Endothelial cell of umbilical vein (primary cell): ENCODE measurements at regions of chr20 and their contacts with region 1.

Region 1: DNA sequence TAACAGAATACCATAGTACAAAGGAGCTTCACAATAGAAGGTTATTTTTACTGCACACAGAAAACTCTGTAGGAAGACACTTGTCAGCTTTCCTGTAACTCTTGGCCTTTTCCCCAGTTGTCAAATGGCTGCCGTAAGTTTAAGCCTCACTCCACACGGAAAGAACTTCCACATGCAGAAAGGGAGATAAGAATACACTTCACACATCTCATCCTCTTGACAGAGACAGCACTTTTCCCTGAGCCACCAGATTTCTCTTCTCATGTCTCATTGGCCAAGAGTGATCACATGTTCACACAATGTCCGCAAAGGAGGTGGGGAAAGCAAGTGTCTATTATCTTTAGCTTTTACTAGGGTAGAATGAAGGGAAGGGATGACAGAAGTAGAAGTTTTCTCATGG is 540.7 kb downstream of the HAO1 start:
- DNase-seq: peak; percentile 79
- H3K4me3 ChIP-seq: no peak overlapping the region
- H3K27ac ChIP-seq: peak overlapping the region; percentile 59
- H3K4me1 ChIP-seq: peaks cover 15% of the 10 kb centered on the region
- H3K27me3 ChIP-seq: peaks cover 0 to 2% of the 10 kb centered on the region in 2 experiments
- CTCF ChIP-seq: no peak
- POLR2A ChIP-seq: no peak

Region 2: DNA sequence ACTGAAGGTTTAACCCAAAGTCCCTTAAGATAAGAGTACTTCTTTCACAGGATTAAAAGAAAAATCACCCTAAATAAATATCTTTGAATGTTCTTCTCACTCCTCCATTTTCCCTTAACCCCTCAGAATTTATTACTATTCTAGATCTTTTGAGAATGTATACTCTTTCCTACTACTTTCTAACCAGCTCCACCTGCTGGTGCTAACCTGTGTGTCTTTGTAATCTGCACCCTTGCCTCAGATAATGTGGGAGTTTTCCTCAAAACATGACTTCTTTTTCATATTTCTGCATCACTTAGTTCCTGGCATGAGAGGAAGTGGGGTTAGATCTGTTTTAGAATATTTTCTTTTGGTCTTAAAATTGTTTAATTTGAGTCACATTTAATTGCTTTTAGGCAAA is 237.9 kb before region 1 on chr20:
- CTCF ChIA-PET with region 1: no interaction called
- POLR2A ChIA-PET with region 1: no interaction called
- dilution Hi-C with region 1: no loop called
- intact Hi-C with region 1: no loop called
- DNase-seq: peak; percentile 36
- H3K4me3 ChIP-seq: no peak overlapping the region
- H3K27ac ChIP-seq: no peak overlapping the region
- H3K4me1 ChIP-seq: peaks cover 16% of the 10 kb centered on the region
- H3K27me3 ChIP-seq: no peaks in the 10 kb centered on the region
- CTCF ChIP-seq: peak in 1 of 2 donors; percentile 35
- POLR2A ChIP-seq: no peak

Region 3: GRCh38 chr20:7272512-7272911 is 127.1 kb before region 1 on chr20:
- CTCF ChIA-PET with region 1: no interaction called
- POLR2A ChIA-PET with region 1: no interaction called
- dilution Hi-C with region 1: no loop called
- intact Hi-C with region 1: no loop called
- DNase-seq: peak; percentile 15
- H3K4me3 ChIP-seq: no peak overlapping the region
- H3K27ac ChIP-seq: no peak overlapping the region
- H3K4me1 ChIP-seq: no peaks in the 10 kb centered on the region
- H3K27me3 ChIP-seq: no peaks in the 10 kb centered on the region
- CTCF ChIP-seq: no peak
- POLR2A ChIP-seq: no peak

Region 4: GRCh38 chr20:7497985-7498384 is 98.4 kb after region 1 on chr20:
- CTCF ChIA-PET with region 1: interaction called, 3 read pairs
- POLR2A ChIA-PET with region 1: no interaction called
- dilution Hi-C with region 1: no loop called
- intact Hi-C with region 1: loop called (anchors 1 kb)
- DNase-seq: peak; percentile 94
- H3K4me3 ChIP-seq: no peak overlapping the region
- H3K27ac ChIP-seq: peak overlapping the region; percentile 69
- H3K4me1 ChIP-seq: peaks cover 25% of the 10 kb centered on the region
- H3K27me3 ChIP-seq: no peaks in the 10 kb centered on the region
- CTCF ChIP-seq: no peak
- POLR2A ChIP-seq: peak; percentile 26

Region 5: GRCh38 chr20:7736336-7736735 is 336.8 kb after region 1 on chr20:
- CTCF ChIA-PET with region 1: no interaction called
- POLR2A ChIA-PET with region 1: no interaction called
- dilution Hi-C with region 1: no loop called
- intact Hi-C with region 1: loop called (anchors 5 kb)
- DNase-seq: peak; percentile 67
- H3K4me3 ChIP-seq: no peak overlapping the region
- H3K27ac ChIP-seq: no peak overlapping the region
- H3K4me1 ChIP-seq: peaks cover 8% of the 10 kb centered on the region
- H3K27me3 ChIP-seq: no peaks in the 10 kb centered on the region
- CTCF ChIP-seq: no peak
- POLR2A ChIP-seq: no peak

Region 6: DNA sequence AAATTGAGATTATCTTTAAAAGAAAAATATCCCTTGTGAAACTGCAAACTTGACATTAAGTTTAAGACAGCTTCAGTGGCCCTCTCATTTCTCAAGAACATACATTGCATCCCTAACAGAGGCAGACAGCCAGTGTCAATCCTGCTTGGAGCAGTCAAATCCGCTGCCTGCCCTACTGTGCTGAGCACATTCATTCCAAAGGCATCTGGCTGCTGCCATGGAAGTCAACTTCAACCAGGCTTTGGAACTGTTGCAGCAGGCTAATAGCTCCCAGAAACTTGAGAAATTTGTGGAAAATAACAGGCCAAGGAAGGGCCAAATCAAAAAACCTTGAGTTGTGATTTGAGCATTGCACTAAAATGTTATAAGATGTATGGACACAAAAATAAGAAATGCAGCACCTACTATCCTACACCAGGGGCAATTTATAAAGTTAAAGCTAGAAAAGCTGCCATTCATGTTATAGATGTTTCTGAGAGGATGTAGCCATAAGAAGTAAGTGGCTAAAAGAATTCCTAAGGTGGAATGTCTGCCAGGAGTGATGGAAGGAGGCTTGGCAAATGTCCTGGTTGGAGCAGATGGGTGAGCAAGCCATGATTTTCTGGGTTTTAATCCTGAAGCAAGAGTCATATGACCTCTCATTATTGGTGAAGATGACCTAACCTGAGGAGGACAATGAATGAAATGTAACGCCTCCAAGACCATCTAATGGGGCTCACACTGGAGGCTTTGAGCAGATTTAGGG is 572.1 kb after region 1 on chr20:
- CTCF ChIA-PET with region 1: no interaction called
- POLR2A ChIA-PET with region 1: no interaction called
- dilution Hi-C with region 1: no loop called
- intact Hi-C with region 1: no loop called
- DNase-seq: no peak
- H3K4me3 ChIP-seq: no peak overlapping the region
- H3K27ac ChIP-seq: no peak overlapping the region
- H3K4me1 ChIP-seq: no peaks in the 10 kb centered on the region
- H3K27me3 ChIP-seq: peaks cover 0 to 4% of the 10 kb centered on the region in 2 experiments
- CTCF ChIP-seq: no peak
- POLR2A ChIP-seq: no peak